ENCODE measurements at regions of chr6 and their contacts with region 1.

Region 1: DNA sequence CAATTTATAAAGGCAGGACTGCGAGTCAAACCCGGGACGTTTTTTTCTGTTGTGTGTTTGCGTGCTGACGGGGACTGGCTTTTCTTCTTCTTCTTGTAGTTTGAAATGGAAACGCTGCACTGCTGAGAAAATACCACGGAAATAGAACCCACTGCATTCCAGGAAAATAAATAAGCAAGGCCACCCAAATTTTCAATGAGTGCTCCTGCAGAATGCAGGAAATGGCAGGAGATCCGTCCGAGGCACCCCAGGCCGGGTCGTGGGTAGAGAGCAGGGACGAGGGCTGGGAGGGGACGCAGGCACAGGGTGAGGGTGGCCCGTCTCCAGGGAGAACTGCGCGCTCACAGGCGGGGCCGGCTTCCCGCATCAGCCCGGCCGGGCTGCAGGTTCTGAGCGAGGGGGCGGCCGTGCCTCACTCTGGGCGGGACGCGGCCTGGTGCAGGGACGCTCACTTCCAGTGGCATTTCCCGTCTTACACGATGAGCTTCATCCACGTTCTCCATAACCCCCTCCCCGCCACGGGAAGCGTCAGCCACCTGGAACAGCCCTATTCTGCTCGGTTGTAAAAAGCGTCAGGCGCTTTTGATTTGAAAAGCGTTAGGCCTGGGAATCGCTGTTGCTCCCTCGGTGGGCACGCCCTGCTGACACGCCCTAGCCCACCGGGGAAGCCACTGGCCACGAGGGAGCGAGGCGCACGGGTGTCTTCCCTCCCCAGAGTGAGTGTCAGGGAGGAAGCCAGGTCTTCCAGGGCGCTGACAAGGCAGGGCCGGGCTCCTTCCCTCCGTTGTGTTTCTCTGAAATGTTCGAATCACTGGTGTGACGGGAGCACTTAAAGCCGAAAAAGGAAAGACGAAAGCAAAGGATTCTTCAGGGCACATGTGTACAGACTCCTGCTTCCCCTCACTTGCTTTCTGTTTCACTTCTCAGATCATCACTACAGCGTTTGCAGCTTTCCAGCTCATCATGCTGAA is 17.9 kb upstream of the EXOC2 start:
- DNase-seq: peak; percentile 79
- ATAC-seq: peak; percentile 87
- H3K4me3 ChIP-seq: peak overlapping the region; percentile 62
- H3K27ac ChIP-seq: peak overlapping the region; percentile 94
- H3K4me1 ChIP-seq: 0 out of 2 replicates have a peak, but pooled peaks cover 5% of the 10 kb centered on the region
- H3K27me3 ChIP-seq: no peaks in the 10 kb centered on the region
- CTCF ChIP-seq: no peak
- POLR2A ChIP-seq: peak; percentile 32; the same call in 1 of the 2 replicates
- RAD21 ChIP-seq: no peak

Region 2: GRCh38 chr6:665403-666267 is 45.3 kb before region 1 on chr6:
- CTCF ChIA-PET with region 1: no interaction called
- POLR2A ChIA-PET with region 1: interaction called, 10 read pairs
- dilution Hi-C with region 1: no loop called
- in situ Hi-C with region 1: no loop called
- intact Hi-C with region 1: no loop called
- DNase-seq: no peak
- ATAC-seq: no peak
- H3K4me3 ChIP-seq: no peak overlapping the region
- H3K27ac ChIP-seq: no peak overlapping the region
- H3K4me1 ChIP-seq: no peaks in the 10 kb centered on the region
- H3K27me3 ChIP-seq: no peaks in the 10 kb centered on the region
- CTCF ChIP-seq: no peak
- POLR2A ChIP-seq: no peak
- RAD21 ChIP-seq: no peak

Region 3: DNA sequence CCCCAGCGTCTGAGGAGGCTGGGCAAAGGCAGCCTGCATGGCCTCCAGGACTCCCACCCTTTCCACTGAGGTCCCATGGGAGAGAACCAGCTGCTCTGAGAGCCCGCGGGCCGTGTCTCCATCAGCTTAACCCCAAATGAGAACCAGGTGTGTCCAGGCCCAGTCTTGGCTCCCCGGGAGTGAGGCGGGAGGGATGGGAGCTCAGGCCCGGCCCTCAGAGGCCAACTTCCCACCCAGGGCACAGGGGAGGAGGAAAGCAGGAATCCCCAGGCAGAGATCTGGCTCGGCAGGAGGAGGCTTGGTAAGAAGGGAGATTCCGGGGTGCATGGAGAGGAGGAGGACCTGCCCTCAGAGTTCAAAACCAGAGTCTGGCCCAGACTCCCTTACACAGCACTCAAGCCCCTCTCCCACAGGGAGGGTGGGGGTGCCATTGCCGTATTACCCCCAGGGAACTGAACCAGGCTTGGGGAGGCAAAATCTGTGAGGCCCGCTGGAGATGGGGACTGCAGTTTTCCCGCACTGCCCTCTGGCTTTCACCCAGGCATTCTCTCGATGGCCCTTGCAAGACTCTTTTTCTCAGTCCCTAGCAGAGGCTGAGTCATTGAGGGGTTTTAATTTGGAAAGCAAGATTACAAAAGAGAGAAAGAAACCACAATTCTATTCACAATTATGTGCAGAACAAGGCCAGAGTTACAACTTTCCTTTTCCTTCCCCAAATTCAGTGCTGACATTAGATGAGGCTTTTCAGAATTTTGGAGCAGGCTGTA is 695.6 kb after region 1 on chr6:
- CTCF ChIA-PET with region 1: no interaction called
- POLR2A ChIA-PET with region 1: no interaction called
- dilution Hi-C with region 1: no loop called
- in situ Hi-C with region 1: loop called (anchors 10 kb)
- intact Hi-C with region 1: no loop called
- DNase-seq: peak; percentile 70
- ATAC-seq: peak; percentile 59
- H3K4me3 ChIP-seq: no peak overlapping the region
- H3K27ac ChIP-seq: peak overlapping the region; percentile 23; the same call in 1 of the 2 replicates
- H3K4me1 ChIP-seq: peaks cover 19% of the 10 kb centered on the region
- H3K27me3 ChIP-seq: no peaks in the 10 kb centered on the region
- CTCF ChIP-seq: 0 out of 2 replicates have a peak, but pooled peaks have one; percentile 17
- POLR2A ChIP-seq: no peak
- RAD21 ChIP-seq: no peak

Measured in IMR-90 (cell line).